Activated CD4-positive, alpha-beta T cell treated with anti-CD3 and anti-CD28 coated beads, Interleukin-2, amount 10 ng/mL, durations not matched to agents 24 days and 14 days (primary cell): ENCODE measurements at regions of chr18 and their contacts with region 1.

Region 1: DNA sequence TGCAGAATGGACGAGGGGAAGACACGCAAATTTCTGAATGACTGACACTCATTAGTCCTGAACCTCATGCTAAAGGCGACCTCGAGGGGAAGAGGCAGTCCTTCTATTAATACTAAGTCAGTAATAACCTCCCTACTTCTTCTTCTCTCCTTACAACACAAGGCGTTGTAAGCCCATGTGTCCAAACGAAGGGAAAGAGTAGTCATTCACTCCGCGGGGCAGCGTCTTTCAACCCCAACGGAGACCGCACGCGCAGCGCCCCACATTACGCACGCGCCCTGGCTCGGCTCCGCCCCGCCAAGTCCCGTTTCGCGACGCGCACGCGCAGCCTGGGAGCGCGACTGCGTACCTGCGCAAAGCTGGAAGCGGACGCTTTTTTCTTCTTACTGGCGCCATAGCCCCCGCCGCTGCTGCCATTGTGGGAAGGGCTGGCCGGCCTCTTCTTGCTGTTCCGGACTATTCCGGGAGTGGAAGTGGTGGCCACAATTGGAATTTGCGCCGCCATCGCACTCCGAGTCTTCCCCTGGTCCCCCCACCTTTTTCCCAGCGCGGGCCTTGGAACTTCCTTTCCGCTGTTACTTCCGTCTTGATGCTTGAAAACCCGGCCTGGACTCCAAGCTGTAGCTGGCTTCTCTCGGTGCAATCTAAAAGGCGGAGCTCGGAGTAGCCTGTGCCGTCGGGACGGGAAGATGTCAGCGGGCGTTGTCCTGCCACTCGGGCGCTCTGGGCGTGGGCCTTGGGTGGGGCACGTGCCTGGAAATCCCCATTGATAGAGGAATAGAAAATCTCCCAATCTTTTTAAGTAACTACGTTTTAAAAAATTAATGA is at the start of gene INO80C:
- DNase-seq: peak; percentile 98
- H3K4me3 Mint-ChIP-seq: peak within 1 kb of the TSS; percentile 95
- H3K27ac Mint-ChIP-seq: peak within 1 kb of the TSS; percentile 99
- H3K4me1 Mint-ChIP-seq: peaks cover 32% of the 10 kb centered on the region
- H3K27me3 Mint-ChIP-seq: peaks cover 3% of the 10 kb centered on the region
- total RNA-seq, gene INO80C: 34.7 and 37.6 TPM in 2 replicates

Region 2: GRCh38 chr18:34867520-34867919 is 630.1 kb before region 1 on chr18:
- intact Hi-C with region 1: loop called (anchors 2 kb)
- DNase-seq: no peak
- H3K4me3 Mint-ChIP-seq: no peak overlapping the region
- H3K27ac Mint-ChIP-seq: peak overlapping the region; percentile 26
- H3K4me1 Mint-ChIP-seq: peaks cover 26% of the 10 kb centered on the region
- H3K27me3 Mint-ChIP-seq: peaks cover 6% of the 10 kb centered on the region

Region 3: GRCh38 chr18:35290073-35290735 is 207.4 kb before region 1 on chr18 and contains the start of gene ZSCAN30:
- intact Hi-C with region 1: loop called (anchors 1 kb)
- DNase-seq: peak; percentile 99
- H3K4me3 Mint-ChIP-seq: peak within 1 kb of the TSS; percentile 100
- H3K27ac Mint-ChIP-seq: peak within 1 kb of the TSS; percentile 95
- H3K4me1 Mint-ChIP-seq: peaks cover 37% of the 10 kb centered on the region
- H3K27me3 Mint-ChIP-seq: no peaks in the 10 kb centered on the region
- total RNA-seq, gene ZSCAN30: 11.6 and 12.2 TPM in 2 replicates

Region 4: GRCh38 chr18:35407871-35408481 is 89.6 kb before region 1 on chr18:
- intact Hi-C with region 1: loop called (anchors 2 kb)
- DNase-seq: peak; percentile 83
- H3K4me3 Mint-ChIP-seq: no peak overlapping the region
- H3K27ac Mint-ChIP-seq: no peak overlapping the region
- H3K4me1 Mint-ChIP-seq: peaks cover 12% of the 10 kb centered on the region
- H3K27me3 Mint-ChIP-seq: peaks cover 5% of the 10 kb centered on the region

Region 5: GRCh38 chr18:35580701-35581539 is 83.3 kb after region 1 on chr18:
- intact Hi-C with region 1: loop called (anchors 2 kb)
- DNase-seq: peak; percentile 86
- H3K4me3 Mint-ChIP-seq: peak overlapping the region; percentile 73
- H3K27ac Mint-ChIP-seq: peak overlapping the region; percentile 66
- H3K4me1 Mint-ChIP-seq: peaks cover 22% of the 10 kb centered on the region
- H3K27me3 Mint-ChIP-seq: peaks cover 12% of the 10 kb centered on the region

Region 6: DNA sequence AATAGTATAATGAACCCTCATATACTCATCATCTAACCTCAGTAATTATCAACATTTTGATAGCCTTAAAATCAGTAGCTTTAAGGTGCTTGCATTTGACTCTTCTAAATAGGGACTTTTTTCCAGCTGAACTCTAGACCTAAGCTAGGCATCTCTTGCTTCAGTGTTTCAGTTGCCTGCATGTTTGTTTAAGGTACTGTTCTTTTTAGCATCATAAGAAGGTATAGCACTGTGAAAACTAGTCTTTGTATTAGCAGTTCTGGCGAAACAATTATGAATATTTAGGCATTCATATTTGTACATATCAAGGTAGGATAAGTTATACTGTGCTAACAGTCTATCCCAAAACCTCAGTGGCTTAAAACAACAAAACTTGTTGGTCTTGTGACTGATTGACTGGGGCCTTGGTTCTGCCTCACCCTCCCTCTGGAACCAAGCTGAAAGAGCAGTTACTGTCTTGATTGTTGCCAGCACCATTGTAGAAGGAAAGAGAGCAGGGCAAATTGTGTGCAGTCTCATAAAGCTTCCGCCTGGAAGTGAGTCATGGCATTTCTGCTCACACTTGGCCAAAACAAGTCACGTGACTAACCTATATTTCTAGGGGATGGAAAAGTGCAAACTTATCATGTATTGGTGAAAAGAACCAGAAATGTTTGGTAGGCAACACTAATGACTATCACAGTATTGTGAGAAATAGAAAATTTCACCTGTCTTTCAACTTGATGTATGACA is 108.3 kb after region 1 on chr18:
- intact Hi-C with region 1: no loop called
- DNase-seq: no peak
- H3K4me3 Mint-ChIP-seq: no peak overlapping the region
- H3K27ac Mint-ChIP-seq: no peak overlapping the region
- H3K4me1 Mint-ChIP-seq: peaks cover 7% of the 10 kb centered on the region
- H3K27me3 Mint-ChIP-seq: no peaks in the 10 kb centered on the region

Region 7: DNA sequence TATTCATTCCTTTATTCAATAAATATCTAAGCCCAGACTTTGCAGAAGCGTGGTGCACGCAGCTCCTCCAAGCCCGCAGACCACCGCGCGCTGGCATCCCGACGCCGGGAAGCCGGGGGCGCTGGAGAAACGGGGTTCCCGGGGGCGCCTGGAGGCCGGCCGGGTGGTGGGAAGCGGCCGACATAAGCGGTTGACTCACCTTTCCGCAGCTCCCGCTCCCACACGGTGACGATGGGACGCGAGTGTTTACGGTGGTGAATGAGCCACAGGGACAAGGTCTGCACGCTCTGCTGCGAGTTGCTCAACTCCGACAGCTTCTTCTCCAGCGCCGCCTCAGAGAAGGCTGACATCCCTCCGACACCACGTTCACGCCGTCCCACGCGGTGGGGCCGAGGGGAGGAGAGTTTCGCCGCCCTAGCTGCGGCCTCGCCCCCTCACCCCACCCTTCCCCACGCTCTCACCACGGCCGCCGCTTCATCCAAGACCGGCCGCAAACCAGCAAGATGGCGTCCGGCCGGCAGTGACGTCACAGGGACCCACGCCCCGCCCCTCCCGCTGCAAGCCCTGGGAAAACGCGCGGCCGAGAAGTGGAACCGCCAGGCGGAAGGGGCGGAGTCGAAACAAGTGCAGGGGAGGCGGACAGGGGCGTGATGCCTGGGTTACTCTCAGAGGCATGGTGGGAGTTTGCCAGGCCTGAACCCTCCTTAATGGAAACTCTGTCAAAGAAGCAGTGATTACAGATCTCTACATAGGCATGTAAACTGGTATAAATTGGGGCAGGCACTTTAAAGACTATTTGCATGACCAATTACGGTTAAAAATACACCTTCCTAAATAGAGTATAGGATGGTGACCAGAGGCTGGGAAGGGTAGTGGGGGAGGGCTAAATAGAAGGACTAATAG is 569.7 kb after region 1 on chr18 and contains the start of gene RPRD1A:
- intact Hi-C with region 1: loop called (anchors 1 kb)
- DNase-seq: peak; percentile 99
- H3K4me3 Mint-ChIP-seq: peak within 1 kb of the TSS; percentile 95
- H3K27ac Mint-ChIP-seq: peak within 1 kb of the TSS; percentile 97
- H3K4me1 Mint-ChIP-seq: peaks cover 28% of the 10 kb centered on the region
- H3K27me3 Mint-ChIP-seq: peaks cover 7% of the 10 kb centered on the region
- total RNA-seq, gene RPRD1A: 24.6 and 27.4 TPM in 2 replicates

Region 8: DNA sequence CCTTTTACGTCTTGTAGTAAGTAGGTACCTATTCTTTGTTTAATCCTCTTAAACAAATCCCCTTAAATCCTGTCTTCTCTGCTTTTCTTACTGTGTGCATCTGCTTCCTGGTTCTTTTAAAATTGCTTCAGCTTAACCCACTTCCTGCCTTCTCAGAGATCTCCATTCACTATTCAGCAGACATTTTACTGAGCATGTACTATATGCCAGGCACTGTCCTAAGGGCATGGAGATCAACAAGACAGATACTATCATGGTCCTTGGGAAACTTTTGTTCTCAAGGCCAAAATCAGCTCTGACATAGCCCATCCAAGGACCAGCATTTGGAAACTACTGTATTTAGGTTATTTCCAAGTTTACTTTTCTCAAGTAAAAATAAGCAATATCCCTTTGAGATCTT is 1103.7 kb after region 1 on chr18:
- intact Hi-C with region 1: no loop called
- DNase-seq: no peak
- H3K4me3 Mint-ChIP-seq: no peak overlapping the region
- H3K27ac Mint-ChIP-seq: no peak overlapping the region
- H3K4me1 Mint-ChIP-seq: peaks cover 2% of the 10 kb centered on the region
- H3K27me3 Mint-ChIP-seq: no peaks in the 10 kb centered on the region